Activated CD8-positive, alpha-beta T cell treated with anti-CD3 and anti-CD28 coated beads for 36 hours (primary cell): ENCODE measurements at regions of chr6 and their contacts with region 1.

Region 1: DNA sequence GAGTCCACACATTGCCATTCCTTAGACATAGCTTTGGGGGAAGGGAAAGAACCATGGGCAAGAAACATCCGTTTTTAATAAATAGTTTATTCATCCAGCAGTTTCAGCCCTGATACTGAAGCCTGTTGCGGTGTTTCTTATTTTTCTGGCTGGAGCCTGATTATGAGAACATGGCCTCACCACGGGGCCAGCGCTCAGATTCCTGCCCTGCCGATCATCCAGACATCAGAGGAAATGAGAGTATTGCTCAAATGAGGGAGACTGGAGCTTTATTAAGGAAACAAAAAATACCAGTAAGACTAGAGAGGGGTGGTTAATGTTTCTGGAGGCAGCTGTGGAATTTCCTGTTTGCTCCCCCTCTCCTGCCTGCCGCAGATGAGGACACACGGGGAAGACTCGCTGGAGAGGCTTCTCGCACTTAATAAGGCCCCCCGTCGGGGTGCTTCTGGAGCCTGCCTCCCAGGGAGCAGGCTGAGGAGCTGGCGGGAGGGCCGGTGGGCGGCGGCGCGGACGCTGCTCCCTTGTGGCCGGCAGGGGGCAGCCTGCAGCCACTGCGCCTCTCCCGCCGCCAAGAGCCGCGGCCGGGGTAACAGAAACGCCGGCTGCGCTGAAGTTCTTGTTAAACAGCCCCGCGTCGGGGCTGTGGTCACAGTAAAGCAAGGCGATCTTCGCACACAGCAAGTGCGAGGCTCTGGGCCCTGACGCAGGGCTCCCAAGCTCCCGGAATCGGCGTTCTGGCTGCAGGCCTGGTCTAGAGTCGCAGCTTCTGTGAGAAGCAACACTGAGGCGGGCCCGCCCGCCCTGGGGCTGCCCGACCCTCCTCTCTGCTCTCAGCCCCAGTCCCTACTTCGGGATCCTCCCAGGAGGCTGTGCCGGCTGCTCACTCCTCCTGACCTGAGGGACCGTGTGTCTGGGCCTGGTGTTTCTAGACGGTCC is 17.5 kb downstream of the LEMD2 start:
- DNase-seq: peak; percentile 70
- ATAC-seq: peak; percentile 78
- H3K4me3 Mint-ChIP-seq: no peak overlapping the region
- H3K27ac Mint-ChIP-seq: no peak overlapping the region
- H3K4me1 Mint-ChIP-seq: peaks cover 9% of the 10 kb centered on the region
- H3K27me3 Mint-ChIP-seq: peaks cover 10% of the 10 kb centered on the region
- CTCF ChIP-seq: peak; percentile 97

Region 2: DNA sequence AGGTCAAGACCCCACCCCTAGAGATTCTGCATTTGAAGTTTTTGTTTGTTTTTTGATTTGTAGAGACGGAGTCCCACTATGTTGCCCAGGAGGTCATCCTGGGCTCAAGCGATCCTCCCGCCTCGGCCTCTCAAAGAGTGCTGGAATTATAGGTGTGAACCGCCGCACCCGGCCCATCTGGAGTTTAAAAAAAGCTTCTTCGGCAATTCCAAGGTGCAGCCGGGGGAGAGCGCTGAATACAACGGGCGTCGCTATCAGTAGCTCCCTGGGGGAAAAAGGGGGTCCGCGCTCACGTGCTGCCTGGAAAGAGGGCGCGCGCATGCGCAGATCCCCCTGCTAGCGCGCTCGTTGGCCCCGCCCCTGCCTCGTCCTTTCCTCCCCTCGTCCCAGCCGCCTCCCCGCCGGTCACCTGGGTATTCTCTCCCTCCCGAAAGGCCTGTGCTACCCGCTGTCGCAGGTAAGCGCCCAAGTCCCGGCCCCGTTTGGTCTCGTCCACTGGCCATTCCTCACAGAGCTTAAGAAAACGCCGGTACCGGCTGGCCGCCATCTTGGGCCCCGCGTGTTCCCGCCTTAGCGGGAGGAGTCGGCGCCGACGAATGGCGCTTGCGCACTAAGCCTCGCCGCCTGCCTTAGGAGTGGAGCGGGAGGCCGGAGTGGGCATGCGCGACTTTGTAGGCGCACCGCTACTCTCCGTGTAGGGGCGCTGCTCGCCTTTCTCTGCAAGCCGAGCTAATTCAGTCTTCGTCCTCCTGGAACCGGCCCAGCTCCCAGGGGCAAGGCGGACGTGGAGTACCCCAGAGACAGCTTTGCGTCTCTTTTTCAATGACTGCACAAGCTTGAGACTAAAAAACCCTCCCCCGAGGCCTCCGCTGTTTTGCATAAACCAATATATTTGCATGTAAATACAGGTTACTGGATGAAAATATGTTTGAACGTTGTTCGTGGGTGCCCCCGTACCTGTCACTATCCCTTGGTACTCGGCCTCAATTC is 60.0 kb before region 1 on chr6 and contains the start of gene UQCC2:
- CTCF ChIA-PET with region 1: interaction called, 16 read pairs
- POLR2A ChIA-PET with region 1: interaction called, 3 read pairs
- intact Hi-C with region 1: no loop called
- DNase-seq: peak; percentile 98
- ATAC-seq: peak; percentile 99
- H3K4me3 Mint-ChIP-seq: peak within 1 kb of the TSS; percentile 94
- H3K27ac Mint-ChIP-seq: peak within 1 kb of the TSS; percentile 98
- H3K4me1 Mint-ChIP-seq: peaks cover 35% of the 10 kb centered on the region
- H3K27me3 Mint-ChIP-seq: no peaks in the 10 kb centered on the region
- CTCF ChIP-seq: peak; percentile 69
- total RNA-seq, gene UQCC2: 127 to 128 TPM

Region 3: DNA sequence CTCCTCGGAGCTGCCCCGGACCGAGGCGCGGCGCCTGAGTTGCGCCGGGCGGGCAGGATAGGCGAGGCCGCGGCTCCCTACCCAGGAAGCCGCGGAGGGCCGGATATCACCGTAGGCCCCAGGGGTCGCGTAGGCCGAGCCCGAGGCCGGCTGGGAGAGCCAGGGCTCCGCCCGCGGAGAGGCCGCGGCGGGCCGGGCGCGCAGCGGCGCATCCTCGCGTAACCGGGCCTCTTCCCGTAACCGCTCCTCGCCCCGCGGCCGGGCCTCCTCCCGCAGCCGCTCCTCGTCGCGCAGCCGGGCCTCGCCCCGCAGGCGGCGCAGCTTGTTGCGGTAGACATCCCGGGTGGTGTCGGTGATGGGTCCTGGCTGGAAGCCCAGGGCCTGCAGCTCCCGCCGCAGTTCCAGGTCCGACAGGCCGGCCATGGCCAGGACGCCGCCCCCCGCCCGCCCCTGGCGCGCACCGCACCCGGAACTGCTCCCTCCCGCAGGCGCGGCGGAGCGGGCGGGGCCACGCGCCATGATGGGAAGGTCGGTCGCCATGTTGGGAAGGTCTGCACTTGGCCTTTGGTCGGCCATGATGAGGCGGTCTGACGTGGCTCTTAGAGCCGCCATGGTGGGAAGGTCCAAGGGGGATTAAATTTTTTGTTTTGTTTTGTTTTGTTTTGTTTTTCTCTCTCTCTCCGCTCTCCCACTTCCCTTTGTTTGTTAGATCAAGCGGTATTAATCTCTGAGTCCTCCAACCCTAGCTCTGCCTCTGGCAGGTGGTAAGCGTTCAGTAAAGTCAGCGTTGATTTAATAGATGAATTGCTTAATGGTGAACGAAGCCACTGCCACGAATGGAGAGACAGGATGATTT is 17.5 kb after region 1 on chr6 and contains the start of gene LEMD2:
- CTCF ChIA-PET with region 1: interaction called, 43 read pairs
- POLR2A ChIA-PET with region 1: interaction called, 5 read pairs
- intact Hi-C with region 1: no loop called
- DNase-seq: peak; percentile 92
- ATAC-seq: peak; percentile 90
- H3K4me3 Mint-ChIP-seq: peak within 1 kb of the TSS; percentile 85
- H3K27ac Mint-ChIP-seq: peak within 1 kb of the TSS; percentile 93
- H3K4me1 Mint-ChIP-seq: peaks cover 41% of the 10 kb centered on the region
- H3K27me3 Mint-ChIP-seq: no peaks in the 10 kb centered on the region
- CTCF ChIP-seq: no peak
- total RNA-seq, gene LEMD2: 40.1 to 41.5 TPM

Region 4: GRCh38 chr6:33896391-33897183 is 125.2 kb after region 1 on chr6:
- CTCF ChIA-PET with region 1: no interaction called
- POLR2A ChIA-PET with region 1: no interaction called
- intact Hi-C with region 1: no loop called
- DNase-seq: no peak
- ATAC-seq: no peak
- H3K4me3 Mint-ChIP-seq: no peak overlapping the region
- H3K27ac Mint-ChIP-seq: no peak overlapping the region
- H3K4me1 Mint-ChIP-seq: peaks cover 39% of the 10 kb centered on the region
- H3K27me3 Mint-ChIP-seq: no peaks in the 10 kb centered on the region
- CTCF ChIP-seq: no peak

Region 5: GRCh38 chr6:34027445-34027936 is 256.1 kb after region 1 on chr6:
- CTCF ChIA-PET with region 1: interaction called, 132 read pairs
- POLR2A ChIA-PET with region 1: interaction called, 3 read pairs
- intact Hi-C with region 1: loop called (anchors 5 kb)
- DNase-seq: peak; percentile 71
- ATAC-seq: peak; percentile 68
- H3K4me3 Mint-ChIP-seq: no peak overlapping the region
- H3K27ac Mint-ChIP-seq: no peak overlapping the region
- H3K4me1 Mint-ChIP-seq: no peaks in the 10 kb centered on the region
- H3K27me3 Mint-ChIP-seq: no peaks in the 10 kb centered on the region
- CTCF ChIP-seq: peak; percentile 96

Region 6: GRCh38 chr6:34154668-34155447 is 383.4 kb after region 1 on chr6:
- CTCF ChIA-PET with region 1: interaction called, 18 read pairs
- POLR2A ChIA-PET with region 1: no interaction called
- intact Hi-C with region 1: no loop called
- DNase-seq: peak; percentile 72
- ATAC-seq: peak; percentile 96
- H3K4me3 Mint-ChIP-seq: no peak overlapping the region
- H3K27ac Mint-ChIP-seq: no peak overlapping the region
- H3K4me1 Mint-ChIP-seq: peaks cover 4% of the 10 kb centered on the region
- H3K27me3 Mint-ChIP-seq: peaks cover 31% of the 10 kb centered on the region
- CTCF ChIP-seq: peak; percentile 100